Aorta (tissue), 5 donors: ENCODE measurements at regions of chrX and their contacts with region 1.

Region 1: DNA sequence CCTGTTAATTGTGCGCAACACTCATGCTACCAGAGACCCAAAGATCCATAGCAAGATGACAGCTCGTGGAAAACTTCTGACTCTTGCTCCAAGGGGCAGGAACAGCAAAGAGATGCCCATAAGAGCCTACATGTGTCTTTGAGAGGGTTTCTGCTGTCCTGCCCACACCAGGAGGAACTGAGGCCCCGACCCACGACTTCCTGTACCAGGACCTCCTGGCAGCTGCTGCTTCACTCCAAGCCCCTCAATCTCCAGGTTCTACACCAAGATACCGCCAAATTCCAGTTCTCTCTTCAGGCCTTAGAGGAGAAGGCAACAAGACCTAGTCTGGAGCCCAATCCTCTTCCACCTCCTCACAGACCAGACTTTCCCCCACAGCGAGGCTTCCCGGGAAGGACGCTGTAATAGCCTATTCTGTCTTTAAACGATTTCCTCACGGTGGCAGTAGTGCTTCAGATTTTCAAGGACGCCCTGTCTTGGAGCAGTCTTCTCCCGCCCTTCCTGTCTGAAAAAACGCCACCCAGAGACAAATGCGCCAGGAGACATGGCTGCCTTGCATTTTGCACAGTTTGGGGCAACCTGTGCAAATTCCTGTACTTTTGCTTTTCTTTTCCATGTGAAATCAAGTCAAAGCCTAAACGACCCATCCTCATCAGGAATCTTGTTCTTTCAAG is 230.2 kb upstream of the STK26 start:
- DNase-seq: peak; percentile 90 to 91
- ATAC-seq: peak; percentile 92
- H3K4me3 ChIP-seq: peak overlapping the region in 1 of 2 donors; percentile 37
- H3K27ac ChIP-seq: no peak overlapping the region
- H3K4me1 ChIP-seq: no peaks in the 10 kb centered on the region
- H3K27me3 ChIP-seq: peaks cover 0 to 2% of the 10 kb centered on the region in 2 donors

Region 2: GRCh38 chrX:131746474-131746968 is 46.4 kb before region 1 on chrX:
- intact Hi-C with region 1: loop called in 1 of 2 experiments (anchors 5 kb)
- DNase-seq: peak; percentile 87 to 91
- ATAC-seq: peak; percentile 86
- H3K4me3 ChIP-seq: peak overlapping the region in 1 of 2 donors; percentile 41
- H3K27ac ChIP-seq: no peak overlapping the region
- H3K4me1 ChIP-seq: no peaks in the 10 kb centered on the region
- H3K27me3 ChIP-seq: no peaks in the 10 kb centered on the region